Aorta (tissue), 5 donors: ENCODE measurements at regions of chr13 and their contacts with region 1.

Region 1: DNA sequence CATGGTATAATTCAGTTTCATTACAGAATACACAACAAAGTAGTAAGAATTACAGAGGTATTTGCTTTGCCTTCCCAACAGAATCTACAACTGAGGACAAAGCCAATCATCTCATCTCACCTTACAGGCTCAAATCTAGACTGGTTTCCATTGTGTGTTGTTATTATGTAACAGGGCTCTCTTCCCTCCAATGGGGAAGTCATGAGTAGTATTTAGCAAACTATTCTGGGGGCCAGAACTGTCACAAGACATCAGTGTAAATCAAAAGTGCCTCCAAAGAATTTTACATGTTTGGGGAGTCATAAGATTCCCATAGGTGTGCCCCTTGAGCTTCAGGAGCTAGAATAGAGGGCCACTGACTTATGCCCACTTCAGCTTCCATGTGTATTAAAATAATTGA is 187.0 kb upstream of the EDNRB start:
- DNase-seq: no peak
- ATAC-seq: no peak
- H3K4me3 ChIP-seq: no peak overlapping the region
- H3K27ac ChIP-seq: no peak overlapping the region
- H3K4me1 ChIP-seq: no peaks in the 10 kb centered on the region
- H3K27me3 ChIP-seq: peaks cover 0 to 2% of the 10 kb centered on the region in 2 donors

Region 2: GRCh38 chr13:78137404-78138142 is 31.9 kb after region 1 on chr13:
- intact Hi-C with region 1: loop called in 1 of 2 experiments (anchors 1 kb)
- DNase-seq: no peak
- ATAC-seq: peak; percentile 74
- H3K4me3 ChIP-seq: no peak overlapping the region
- H3K27ac ChIP-seq: no peak overlapping the region
- H3K4me1 ChIP-seq: no peaks in the 10 kb centered on the region
- H3K27me3 ChIP-seq: peaks cover 0 to 1% of the 10 kb centered on the region in 2 donors